Transverse colon (tissue), 4 donors: ENCODE measurements at regions of chr19 and their contacts with region 1.

Region 1: DNA sequence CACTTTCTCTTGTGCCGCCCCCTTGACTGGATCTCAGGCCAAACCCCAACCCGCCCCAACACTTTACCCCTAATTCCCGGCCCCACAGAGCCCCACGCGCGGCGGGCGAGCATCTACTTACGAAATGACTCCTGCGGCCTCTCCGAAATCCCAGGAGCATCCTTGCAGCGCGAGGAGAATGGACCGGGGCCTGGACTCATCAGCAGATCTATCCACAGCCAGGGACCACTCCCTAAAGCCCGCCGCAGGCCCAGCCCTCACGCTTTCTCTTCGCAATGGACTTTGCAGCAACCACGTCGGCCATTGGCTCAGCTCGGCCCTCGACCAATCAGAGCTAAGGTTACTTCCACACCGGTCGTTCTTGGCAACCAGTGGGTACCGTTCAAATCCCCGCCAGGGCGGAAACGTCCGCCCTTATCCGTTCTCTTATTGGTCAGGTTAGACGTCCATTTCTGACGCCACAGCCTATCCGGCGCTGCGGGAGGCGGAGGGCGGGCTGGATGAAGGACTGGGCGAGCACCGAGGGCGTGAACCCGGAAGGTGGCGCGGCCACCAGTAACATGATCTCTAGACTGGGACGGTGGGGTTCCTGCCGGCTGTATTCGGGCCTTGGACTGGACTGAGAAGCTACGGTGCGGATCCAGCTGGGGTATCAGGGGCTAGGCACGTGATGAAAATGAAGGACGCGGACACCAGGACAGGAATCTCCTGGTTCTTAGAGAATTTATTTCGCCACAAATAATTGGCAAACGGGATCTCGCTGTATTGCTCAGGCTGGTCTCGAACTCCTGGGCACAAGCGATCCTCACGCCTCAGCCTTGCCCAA is at the starts of genes CEP89 and FAAP24:
- DNase-seq: peak; percentile 99
- H3K4me3 ChIP-seq: peak within 1 kb of the TSS; percentile 72 to 89 (median 82)
- H3K27ac ChIP-seq: peak within 1 kb of the TSS; percentile 74 to 83 (median 82)
- H3K4me1 ChIP-seq: peaks cover 4 to 25% (median 21%) of the 10 kb centered on the region in 4 donors
- H3K27me3 ChIP-seq: no peaks in the 10 kb centered on the region
- CTCF ChIP-seq: peak in 1 of 5 experiments; percentile 41
- EP300 ChIP-seq: no peak
- POLR2A ChIP-seq: peak; percentile 63
- total RNA-seq, gene CEP89: 4.5 to 39.6 (median 9.4) TPM
- total RNA-seq, gene FAAP24: 0.48 to 0.55 TPM in 2 of 4 donors, not detected in the others

Region 2: GRCh38 chr19:32688311-32688710 is 283.6 kb before region 1 on chr19:
- in situ Hi-C with region 1: loop called in 1 of 4 experiments (anchors 10 kb)
- intact Hi-C with region 1: no loop called
- DNase-seq: peak; percentile 33
- H3K4me3 ChIP-seq: no peak overlapping the region
- H3K27ac ChIP-seq: no peak overlapping the region
- H3K4me1 ChIP-seq: peaks cover 14 to 24% (median 23%) of the 10 kb centered on the region in 4 donors
- H3K27me3 ChIP-seq: no peaks in the 10 kb centered on the region
- CTCF ChIP-seq: no peak
- EP300 ChIP-seq: no peak
- POLR2A ChIP-seq: no peak

Region 3: DNA sequence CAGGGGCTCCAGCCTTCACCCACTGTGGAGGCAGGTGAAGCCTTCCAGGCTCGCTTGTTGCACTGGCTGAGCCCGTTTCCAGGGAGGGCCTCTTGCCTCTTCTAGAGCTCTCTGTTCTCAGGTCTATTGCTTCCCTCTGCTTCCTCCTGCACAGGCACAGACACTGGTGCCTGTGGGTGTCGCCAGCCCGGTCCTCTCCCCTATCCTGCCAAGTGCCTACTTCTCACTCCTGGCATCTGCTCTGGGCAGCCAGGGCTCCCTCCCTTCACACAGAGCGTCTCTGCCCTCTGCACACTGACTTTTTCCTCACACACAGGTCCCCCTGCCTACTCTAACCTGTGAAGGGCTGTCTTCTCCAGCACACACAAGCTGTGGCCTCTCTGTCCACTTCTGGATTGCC is 162.7 kb before region 1 on chr19:
- in situ Hi-C with region 1: no loop called
- intact Hi-C with region 1: no loop called
- DNase-seq: no peak
- H3K4me3 ChIP-seq: no peak overlapping the region
- H3K27ac ChIP-seq: no peak overlapping the region
- H3K4me1 ChIP-seq: peaks cover 0 to 19% (median 0%) of the 10 kb centered on the region in 4 donors
- H3K27me3 ChIP-seq: peaks cover 3% of the 10 kb centered on the region
- CTCF ChIP-seq: no peak
- EP300 ChIP-seq: no peak
- POLR2A ChIP-seq: no peak

Region 4: DNA sequence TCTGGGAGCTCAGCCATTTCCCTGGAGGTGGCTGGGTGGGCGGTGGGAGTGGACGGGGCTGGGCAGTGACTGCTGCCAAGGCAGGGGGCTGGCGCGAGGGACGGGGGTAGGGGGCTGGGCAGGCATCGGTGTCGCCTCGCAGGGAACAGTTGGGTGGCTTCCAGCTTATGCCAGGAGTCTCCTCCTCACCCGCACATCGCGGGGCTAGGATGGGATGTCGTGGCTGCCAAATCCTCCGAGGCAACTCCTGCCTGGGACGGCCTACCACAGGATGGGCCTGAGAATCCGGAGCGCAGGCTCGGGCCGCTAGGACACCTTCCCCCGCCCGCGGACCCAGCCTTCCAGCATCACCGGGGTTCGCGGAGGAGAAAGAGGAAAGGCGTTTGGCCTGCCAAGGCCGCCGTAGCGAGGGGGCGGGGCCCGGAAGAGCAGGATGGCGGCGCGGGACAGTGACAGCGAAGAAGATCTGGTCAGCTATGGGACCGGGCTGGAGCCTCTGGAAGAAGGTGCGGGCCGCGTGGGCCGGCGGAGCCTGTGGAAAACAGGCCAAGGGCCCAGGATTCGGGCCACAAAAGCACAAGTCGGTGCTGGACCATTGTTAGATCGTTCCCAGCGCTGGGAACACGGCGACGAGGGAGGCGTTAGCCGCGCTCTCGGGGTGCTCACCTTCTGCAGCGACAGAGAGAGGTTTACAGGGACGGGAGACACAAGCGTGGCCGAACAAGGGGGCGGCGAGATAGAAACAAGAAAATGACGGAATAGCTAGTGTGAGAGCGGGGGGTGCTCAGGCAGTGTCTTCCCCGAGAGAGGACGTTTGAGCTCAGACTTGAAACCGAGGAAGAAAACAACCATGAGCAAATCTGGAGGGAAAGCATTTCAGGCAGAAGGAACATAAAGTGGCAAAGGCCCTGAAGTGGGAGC is 109.1 kb after region 1 on chr19 and contains the start of gene GPATCH1:
- in situ Hi-C with region 1: loop called in 1 of 4 experiments (anchors 25 kb)
- intact Hi-C with region 1: no loop called
- DNase-seq: peak; percentile 91
- H3K4me3 ChIP-seq: peak within 1 kb of the TSS; percentile 77 to 96 (median 88)
- H3K27ac ChIP-seq: peak within 1 kb of the TSS; percentile 80 to 89 (median 85)
- H3K4me1 ChIP-seq: peaks cover 12 to 38% (median 21%) of the 10 kb centered on the region in 4 donors
- H3K27me3 ChIP-seq: no peaks in the 10 kb centered on the region
- CTCF ChIP-seq: no peak
- EP300 ChIP-seq: no peak
- POLR2A ChIP-seq: peak; percentile 62
- total RNA-seq, gene GPATCH1: 9.1 to 16.8 (median 14.8) TPM

Region 5: GRCh38 chr19:33110137-33110910 is 138.4 kb after region 1 on chr19:
- in situ Hi-C with region 1: loop called in 2 of 4 experiments (anchors 25 kb)
- intact Hi-C with region 1: no loop called
- DNase-seq: no peak
- H3K4me3 ChIP-seq: no peak overlapping the region
- H3K27ac ChIP-seq: no peak overlapping the region
- H3K4me1 ChIP-seq: no peaks in the 10 kb centered on the region
- H3K27me3 ChIP-seq: no peaks in the 10 kb centered on the region
- CTCF ChIP-seq: no peak
- EP300 ChIP-seq: no peak
- POLR2A ChIP-seq: no peak

Region 6: DNA sequence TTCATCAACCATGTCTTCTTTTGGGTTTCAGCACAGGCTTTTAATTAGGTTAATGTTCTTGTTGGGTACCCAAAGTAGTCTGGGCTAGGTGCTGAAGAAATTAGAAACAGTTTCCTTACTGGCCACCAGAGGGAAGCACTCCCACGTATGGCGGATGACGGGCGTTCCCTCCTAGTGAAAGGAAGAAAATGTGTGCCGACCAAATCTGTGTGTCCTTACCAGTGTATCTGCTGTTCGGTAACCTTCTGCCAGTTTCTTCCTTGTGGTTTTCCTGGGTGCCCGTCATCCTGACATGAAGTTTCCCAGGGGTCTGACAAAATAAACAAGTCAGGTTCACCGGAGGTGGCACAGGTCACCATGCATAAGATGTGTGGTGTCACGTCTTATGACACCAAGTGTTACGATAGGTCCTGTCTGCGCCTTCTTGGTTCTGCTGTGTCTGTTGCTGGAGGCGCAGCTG is 154.0 kb after region 1 on chr19:
- in situ Hi-C with region 1: loop called in 3 of 4 experiments (anchors 10 to 25 kb)
- intact Hi-C with region 1: no loop called
- DNase-seq: peak; percentile 46
- H3K4me3 ChIP-seq: no peak overlapping the region
- H3K27ac ChIP-seq: no peak overlapping the region
- H3K4me1 ChIP-seq: peaks cover 0 to 3% (median 0%) of the 10 kb centered on the region in 4 donors
- H3K27me3 ChIP-seq: no peaks in the 10 kb centered on the region
- CTCF ChIP-seq: peak; percentile 74 to 88 (median 81)
- EP300 ChIP-seq: no peak
- POLR2A ChIP-seq: no peak

Region 7: GRCh38 chr19:33472691-33473652 is 501.0 kb after region 1 on chr19:
- in situ Hi-C with region 1: no loop called
- intact Hi-C with region 1: no loop called
- DNase-seq: no peak
- H3K4me3 ChIP-seq: no peak overlapping the region
- H3K27ac ChIP-seq: no peak overlapping the region
- H3K4me1 ChIP-seq: peaks cover 0 to 3% (median 0%) of the 10 kb centered on the region in 4 donors
- H3K27me3 ChIP-seq: no peaks in the 10 kb centered on the region
- CTCF ChIP-seq: no peak
- EP300 ChIP-seq: no peak
- POLR2A ChIP-seq: no peak